Gastrocnemius medialis (tissue), 4 donors: ENCODE measurements at regions of chr7 and their contacts with region 1.

Region 1: DNA sequence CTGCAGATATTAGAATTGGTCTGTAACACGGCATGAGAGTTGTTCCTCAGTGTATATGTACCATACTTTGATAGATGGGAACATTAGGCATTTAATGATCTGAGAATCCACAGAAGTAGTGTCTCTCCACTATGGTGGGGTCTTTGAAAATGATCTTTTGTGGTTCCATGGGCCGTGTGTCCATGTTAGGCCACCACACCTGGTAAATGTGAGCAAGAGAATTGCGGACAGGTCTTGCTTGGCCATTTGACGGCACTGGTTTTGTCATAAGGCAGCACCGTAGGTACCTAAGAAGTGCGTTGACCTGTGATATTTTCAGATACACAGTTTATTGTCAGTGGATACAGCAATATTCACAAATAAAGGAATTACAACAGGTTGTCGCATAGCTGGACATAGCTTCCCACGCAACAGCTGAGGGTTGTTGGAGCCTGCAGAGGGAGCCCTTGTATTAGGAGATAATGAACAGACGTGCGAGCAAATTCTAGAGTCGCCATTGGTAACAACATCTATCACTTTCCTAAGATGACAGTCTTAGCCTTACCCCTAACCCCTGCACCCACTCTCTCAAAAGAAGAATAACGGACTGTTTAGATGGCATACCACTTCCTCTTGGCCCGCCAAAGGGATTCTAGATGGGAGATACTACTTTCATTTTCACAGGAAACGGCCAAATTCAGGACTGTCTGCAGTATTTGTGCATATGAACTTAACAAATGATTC is 111.4 kb downstream of the COL28A1 start:
- DNase-seq: peak; percentile 11 to 33
- ATAC-seq: peak; percentile 76 to 87
- H3K4me3 ChIP-seq: peak overlapping the region; percentile 39 to 59 (median 52)
- H3K27ac ChIP-seq: no peak overlapping the region
- H3K4me1 ChIP-seq: no peaks in the 10 kb centered on the region
- H3K27me3 ChIP-seq: no peaks in the 10 kb centered on the region
- CTCF ChIP-seq: peak; percentile 46 to 72 (median 62)
- POLR2A ChIP-seq: no peak

Region 2: GRCh38 chr7:7228472-7228871 is 195.8 kb before region 1 on chr7:
- in situ Hi-C with region 1: no loop called
- intact Hi-C with region 1: no loop called
- DNase-seq: no peak
- ATAC-seq: no peak
- H3K4me3 ChIP-seq: no peak overlapping the region
- H3K27ac ChIP-seq: no peak overlapping the region
- H3K4me1 ChIP-seq: no peaks in the 10 kb centered on the region
- H3K27me3 ChIP-seq: no peaks in the 10 kb centered on the region
- CTCF ChIP-seq: no peak
- POLR2A ChIP-seq: no peak

Region 3: GRCh38 chr7:7535691-7536090 is 111.4 kb after region 1 on chr7 and contains the start of gene COL28A1:
- in situ Hi-C with region 1: loop called (anchors 5 to 25 kb)
- intact Hi-C with region 1: loop called (anchors 2 kb)
- DNase-seq: no peak
- ATAC-seq: no peak
- H3K4me3 ChIP-seq: peak within 1 kb of the TSS in 3 of 4 donors; percentile 3 to 16 (median 7)
- H3K27ac ChIP-seq: peak within 1 kb of the TSS; percentile 9 to 56 (median 36)
- H3K4me1 ChIP-seq: peaks cover 0 to 9% of the 10 kb centered on the region in 2 donors
- H3K27me3 ChIP-seq: no peaks in the 10 kb centered on the region
- CTCF ChIP-seq: no peak
- POLR2A ChIP-seq: no peak
- total RNA-seq, gene COL28A1: 0.58 to 15.2 (median 2.0) TPM

Region 4: GRCh38 chr7:7542251-7542835 is 118.0 kb after region 1 on chr7:
- in situ Hi-C with region 1: loop called (anchors 5 to 25 kb)
- intact Hi-C with region 1: loop called (anchors 2 kb)
- DNase-seq: no peak
- ATAC-seq: no peak
- H3K4me3 ChIP-seq: no peak overlapping the region
- H3K27ac ChIP-seq: no peak overlapping the region
- H3K4me1 ChIP-seq: no peaks in the 10 kb centered on the region
- H3K27me3 ChIP-seq: no peaks in the 10 kb centered on the region
- CTCF ChIP-seq: no peak
- POLR2A ChIP-seq: no peak

Region 5: DNA sequence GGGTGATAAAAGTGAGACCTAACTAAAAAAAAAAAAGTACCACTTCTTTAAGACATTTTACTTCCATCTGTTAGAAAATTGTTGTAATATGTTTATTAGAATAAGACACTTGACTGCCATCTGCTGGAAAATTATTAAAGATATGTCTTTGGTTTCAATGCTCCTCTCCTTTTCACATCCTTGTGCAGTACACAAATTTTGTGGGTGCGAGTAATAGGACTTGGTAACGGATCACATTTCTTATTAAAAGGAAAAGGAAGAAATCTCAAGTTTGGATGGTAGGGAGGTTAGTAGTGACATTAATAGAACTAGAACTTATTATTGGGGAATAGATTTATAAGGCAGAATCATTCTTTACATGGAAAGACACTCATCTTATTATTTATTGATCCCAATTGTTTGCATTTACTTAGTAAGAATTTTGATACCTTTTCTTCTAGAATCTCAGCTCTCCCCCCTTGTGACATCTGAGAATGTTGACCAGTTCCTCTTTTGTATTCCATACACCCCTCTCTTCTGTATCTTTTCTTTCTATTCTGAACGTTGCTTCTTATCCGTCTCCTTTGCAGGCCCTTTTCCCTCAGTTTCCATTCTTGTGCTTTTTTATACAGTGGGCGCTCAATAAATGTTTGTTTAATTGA is 337.1 kb after region 1 on chr7:
- in situ Hi-C with region 1: loop called in 1 of 4 experiments (anchors 10 kb)
- intact Hi-C with region 1: no loop called
- DNase-seq: no peak
- ATAC-seq: peak; percentile 62 to 63
- H3K4me3 ChIP-seq: peak overlapping the region; percentile 32 to 50 (median 40)
- H3K27ac ChIP-seq: peak overlapping the region; percentile 21 to 70 (median 58)
- H3K4me1 ChIP-seq: peaks cover 9 to 14% of the 10 kb centered on the region in 2 donors
- H3K27me3 ChIP-seq: no peaks in the 10 kb centered on the region
- CTCF ChIP-seq: peak; percentile 29 to 58 (median 40)
- POLR2A ChIP-seq: no peak

Region 6: GRCh38 chr7:8226501-8226900 is 802.2 kb after region 1 on chr7:
- in situ Hi-C with region 1: loop called in 3 of 4 experiments (anchors 10 to 25 kb)
- intact Hi-C with region 1: no loop called
- DNase-seq: no peak
- ATAC-seq: no peak
- H3K4me3 ChIP-seq: no peak overlapping the region
- H3K27ac ChIP-seq: no peak overlapping the region
- H3K4me1 ChIP-seq: no peaks in the 10 kb centered on the region
- H3K27me3 ChIP-seq: no peaks in the 10 kb centered on the region
- CTCF ChIP-seq: no peak
- POLR2A ChIP-seq: no peak